ENCODE measurements at regions of chr11 and their contacts with region 1.

Region 1: DNA sequence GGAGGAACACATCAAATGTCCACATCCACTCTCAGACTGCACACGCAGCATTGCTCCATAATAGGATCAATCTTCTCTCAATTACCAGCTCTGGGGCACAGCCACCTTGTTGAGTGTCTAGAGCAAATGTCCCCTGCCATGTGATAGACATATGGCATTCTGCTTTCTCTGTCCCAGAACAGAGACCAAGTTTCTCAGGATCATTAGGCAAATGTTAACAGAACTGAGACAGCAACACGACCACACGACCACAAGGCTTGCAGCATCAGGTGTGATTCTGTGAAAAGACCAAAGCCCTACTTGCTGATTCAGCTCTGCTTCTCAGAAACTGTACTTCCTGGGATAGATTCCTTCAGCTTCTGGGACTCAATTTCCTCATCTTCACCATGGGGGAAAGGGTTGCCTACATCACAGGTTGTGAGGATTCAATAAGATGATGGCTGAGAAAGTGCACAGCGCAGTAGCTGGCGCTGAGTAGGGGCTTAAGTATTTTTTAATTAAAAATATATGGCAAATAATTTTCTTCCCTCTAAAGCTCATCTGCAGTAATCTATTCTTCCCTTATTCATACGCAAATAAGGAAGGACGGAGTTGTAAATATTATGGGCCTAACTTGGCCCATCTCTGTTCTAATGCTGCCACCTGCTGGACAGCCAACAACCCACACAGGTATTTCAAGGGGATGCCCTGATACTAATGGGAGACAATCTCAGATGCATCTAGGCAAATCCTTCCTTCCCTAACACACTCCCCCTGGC is 54.3 kb upstream of the USP47 start:
- DNase-seq: peak; percentile 43
- ATAC-seq: peak; percentile 95
- H3K4me3 ChIP-seq: no peak overlapping the region
- H3K27ac ChIP-seq: no peak overlapping the region
- H3K4me1 ChIP-seq: no peaks in the 10 kb centered on the region
- H3K27me3 ChIP-seq: peaks cover 0 to 2% of the 10 kb centered on the region in 2 experiments; a peak in 1 of 5 replicates
- CTCF ChIP-seq: peak; percentile 89
- EP300 ChIP-seq: no peak
- POLR2A ChIP-seq: no peak
- RAD21 ChIP-seq: peak; percentile 70

Region 2: GRCh38 chr11:10933455-10934292 is 853.8 kb before region 1 on chr11:
- CTCF ChIA-PET with region 1: interaction called, 4 read pairs
- POLR2A ChIA-PET with region 1: no interaction called
- in situ Hi-C with region 1: loop called (anchors 25 kb)
- intact Hi-C with region 1: loop called (anchors 5 kb)
- DNase-seq: peak; percentile 62
- ATAC-seq: peak; percentile 91
- H3K4me3 ChIP-seq: peak overlapping the region in 2 of 3 experiments; percentile 23 to 36; a peak in 2 of 6 replicates
- H3K27ac ChIP-seq: no peak overlapping the region
- H3K4me1 ChIP-seq: peaks cover 19% of the 10 kb centered on the region
- H3K27me3 ChIP-seq: peaks cover 2 to 55% of the 10 kb centered on the region in 2 experiments; a peak in 4 of 5 replicates
- CTCF ChIP-seq: peak; percentile 90
- EP300 ChIP-seq: no peak
- POLR2A ChIP-seq: no peak
- RAD21 ChIP-seq: peak; percentile 79

Region 3: DNA sequence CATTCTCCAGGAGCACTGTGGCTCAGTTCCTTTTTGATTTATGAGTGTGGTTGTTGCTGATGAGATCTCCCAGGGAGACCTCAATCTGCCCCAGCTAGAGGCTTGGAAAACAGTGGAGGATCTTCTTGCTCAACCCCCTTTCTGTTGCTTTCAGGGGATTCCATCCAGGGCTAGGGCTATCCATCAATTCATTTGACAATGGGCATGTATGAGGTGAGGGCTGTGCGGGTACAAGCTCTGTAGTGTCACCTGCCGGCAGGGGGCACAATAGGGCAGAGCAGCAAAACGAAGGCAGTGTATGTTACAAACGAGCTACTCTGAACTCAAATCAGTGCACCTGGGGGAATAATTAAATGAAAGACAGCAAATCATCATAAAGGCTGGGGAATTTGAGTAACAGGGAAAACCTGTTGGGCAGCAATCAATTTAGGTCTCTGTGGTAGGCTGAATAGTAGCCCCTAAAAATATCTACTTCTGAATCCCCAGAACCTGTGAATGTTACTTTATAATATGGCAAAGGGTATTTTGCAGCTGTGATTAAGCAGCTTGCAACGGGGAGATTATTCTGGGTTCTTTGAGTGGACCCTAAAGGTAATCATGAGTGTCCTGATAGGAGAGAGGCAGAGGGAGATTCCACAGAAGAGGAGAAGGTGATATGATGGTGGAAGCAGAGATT is 759.3 kb before region 1 on chr11:
- CTCF ChIA-PET with region 1: interaction called, 12 read pairs
- POLR2A ChIA-PET with region 1: no interaction called
- in situ Hi-C with region 1: loop called (anchors 5 kb)
- intact Hi-C with region 1: loop called (anchors 1 kb)
- DNase-seq: peak; percentile 34
- ATAC-seq: peak; percentile 94
- H3K4me3 ChIP-seq: no peak overlapping the region
- H3K27ac ChIP-seq: no peak overlapping the region
- H3K4me1 ChIP-seq: no peaks in the 10 kb centered on the region
- H3K27me3 ChIP-seq: 0 out of 5 replicates have a peak, but pooled peaks cover 0 to 3% of the 10 kb centered on the region in 2 experiments
- CTCF ChIP-seq: peak; percentile 79
- EP300 ChIP-seq: no peak
- POLR2A ChIP-seq: no peak
- RAD21 ChIP-seq: 0 out of 2 replicates have a peak, but pooled peaks have one; percentile 16

Region 4: DNA sequence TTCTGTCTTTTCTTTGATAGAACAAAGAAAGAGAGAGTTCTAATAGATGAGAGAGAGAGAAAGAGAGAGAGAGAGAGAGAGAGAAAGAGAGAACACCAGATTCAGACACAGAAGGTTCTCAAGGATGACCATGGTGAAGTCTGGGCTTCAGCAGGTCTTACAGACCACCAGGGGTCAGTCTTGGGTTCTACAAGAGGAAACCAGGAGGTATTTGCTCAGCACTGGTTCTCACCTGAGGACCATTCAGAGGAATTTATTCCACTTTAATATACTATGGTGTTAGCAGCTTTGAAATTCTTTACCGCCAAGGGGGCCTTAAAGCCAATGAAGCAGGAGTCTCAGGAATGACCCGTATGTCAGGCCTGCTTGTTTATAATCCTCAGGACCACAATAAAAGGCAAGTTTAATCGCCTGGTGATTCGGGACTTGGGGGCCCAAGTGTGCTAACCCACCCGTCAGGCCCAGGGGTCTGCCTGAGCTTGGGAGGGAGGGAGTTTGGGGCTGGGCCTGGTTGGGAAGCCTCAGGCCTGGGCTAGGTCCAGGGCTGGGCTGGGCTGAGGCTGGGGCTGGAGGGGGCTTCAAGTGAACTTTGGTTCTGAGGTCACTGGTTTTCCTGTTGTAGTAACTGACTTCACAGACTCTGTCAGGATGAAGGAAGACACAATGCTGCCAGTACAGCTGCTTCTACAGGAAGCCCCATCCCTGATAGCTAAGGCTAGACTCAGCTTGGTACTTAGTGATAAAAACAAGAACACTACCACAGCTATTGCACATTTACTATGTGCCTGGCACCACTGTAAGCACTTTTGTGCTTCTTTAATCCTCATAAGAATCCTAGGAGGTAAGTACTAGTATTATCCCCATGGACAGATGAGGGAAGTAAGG is 750.4 kb before region 1 on chr11:
- CTCF ChIA-PET with region 1: interaction called, 12 read pairs
- POLR2A ChIA-PET with region 1: no interaction called
- in situ Hi-C with region 1: no loop called
- intact Hi-C with region 1: no loop called
- DNase-seq: peak; percentile 64
- ATAC-seq: peak; percentile 89
- H3K4me3 ChIP-seq: no peak overlapping the region
- H3K27ac ChIP-seq: no peak overlapping the region
- H3K4me1 ChIP-seq: no peaks in the 10 kb centered on the region
- H3K27me3 ChIP-seq: peaks cover 2 to 3% of the 10 kb centered on the region in 2 experiments; a peak in 4 of 5 replicates
- CTCF ChIP-seq: peak; percentile 68
- EP300 ChIP-seq: no peak
- POLR2A ChIP-seq: no peak
- RAD21 ChIP-seq: 0 out of 2 replicates have a peak, but pooled peaks have one; percentile 29

Region 5: DNA sequence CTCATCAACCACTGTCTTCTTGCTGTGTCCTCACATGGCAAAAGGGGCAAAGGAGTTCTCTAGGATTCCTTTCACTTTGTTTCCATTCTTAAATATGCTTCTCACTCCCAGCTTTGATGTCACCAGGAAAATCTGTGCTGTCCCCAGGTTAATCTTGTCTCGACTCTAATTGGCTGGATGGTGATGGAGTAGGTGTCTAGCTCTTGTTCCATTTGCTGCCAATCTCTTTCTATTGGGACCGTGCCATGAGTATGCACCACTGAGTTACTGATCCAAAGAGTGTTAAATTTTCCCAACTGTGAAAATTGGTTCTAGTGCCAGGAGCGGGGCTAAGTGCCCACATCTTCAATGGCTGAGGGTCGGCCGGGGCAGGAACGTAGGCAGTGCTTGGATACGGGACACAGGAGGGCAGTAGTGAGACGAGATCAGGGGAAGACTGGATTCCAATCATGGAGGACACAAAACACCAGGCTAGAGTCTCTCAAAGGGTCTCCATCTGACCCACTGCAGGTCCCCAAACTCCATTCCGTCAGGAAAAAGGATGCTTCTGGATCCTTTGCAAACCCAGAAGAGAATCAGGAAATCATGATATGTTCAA is 386.8 kb before region 1 on chr11:
- CTCF ChIA-PET with region 1: interaction called, 18 read pairs
- POLR2A ChIA-PET with region 1: no interaction called
- in situ Hi-C with region 1: loop called (anchors 5 kb)
- intact Hi-C with region 1: loop called (anchors 1 kb)
- DNase-seq: peak; percentile 12
- ATAC-seq: peak; percentile 70
- H3K4me3 ChIP-seq: no peak overlapping the region
- H3K27ac ChIP-seq: no peak overlapping the region
- H3K4me1 ChIP-seq: no peaks in the 10 kb centered on the region
- H3K27me3 ChIP-seq: peaks cover 1 to 17% of the 10 kb centered on the region in 2 experiments; a peak in 3 of 5 replicates
- CTCF ChIP-seq: peak; percentile 40; the same call in 1 of the 2 replicates
- EP300 ChIP-seq: no peak
- POLR2A ChIP-seq: no peak
- RAD21 ChIP-seq: no peak

Region 6: DNA sequence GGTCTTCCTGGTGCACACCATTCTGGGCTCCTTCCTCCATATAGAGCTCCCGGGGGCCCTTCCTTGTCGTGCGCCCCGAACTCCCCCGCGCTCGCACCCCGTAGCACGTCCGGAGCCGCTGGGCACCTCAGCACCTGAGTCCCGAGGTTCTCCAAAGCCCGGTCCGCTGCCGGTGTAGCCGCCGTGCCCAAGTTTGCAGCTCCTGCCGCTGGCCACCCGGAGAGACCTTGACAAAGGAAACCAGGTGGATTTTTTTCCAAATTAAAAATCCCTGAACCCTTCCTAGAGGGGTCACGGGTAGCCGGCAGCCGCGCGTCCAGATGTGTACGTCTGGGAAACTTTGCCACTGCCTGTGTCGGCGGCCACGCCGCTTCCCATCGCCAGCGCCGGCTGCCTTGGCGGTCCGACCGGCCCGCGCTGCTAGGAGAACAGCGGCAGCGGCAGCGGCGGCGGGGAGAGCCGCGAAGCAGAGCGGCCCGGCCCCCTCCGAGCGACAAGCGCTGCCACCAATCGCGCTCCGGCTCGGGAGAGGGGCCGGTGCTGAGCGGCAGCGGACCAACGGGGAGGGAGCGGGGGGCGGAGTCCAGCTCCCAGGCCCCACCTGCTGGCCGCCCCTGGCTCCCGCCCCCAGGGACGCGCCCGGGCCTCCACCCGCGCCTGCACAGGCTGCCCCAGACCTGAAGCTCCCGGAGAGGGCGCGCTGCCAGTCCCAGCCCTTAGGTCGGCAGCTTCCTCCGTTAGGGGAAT is 165.7 kb before region 1 on chr11 and contains the start of gene GALNT18:
- CTCF ChIA-PET with region 1: no interaction called
- POLR2A ChIA-PET with region 1: no interaction called
- in situ Hi-C with region 1: no loop called
- intact Hi-C with region 1: loop called (anchors 5 kb)
- DNase-seq: peak; percentile 67
- ATAC-seq: peak; percentile 99
- H3K4me3 ChIP-seq: peak within 1 kb of the TSS; percentile 39 to 64 (median 47); a peak in 5 of 6 replicates
- H3K27ac ChIP-seq: no peak within 1 kb of the TSS
- H3K4me1 ChIP-seq: peaks cover 12% of the 10 kb centered on the region; the same call in 1 of the 2 replicates
- H3K27me3 ChIP-seq: peaks cover 5 to 56% of the 10 kb centered on the region in 2 experiments; a peak in 4 of 5 replicates
- CTCF ChIP-seq: peak; percentile 57
- EP300 ChIP-seq: no peak
- POLR2A ChIP-seq: no peak
- RAD21 ChIP-seq: 0 out of 2 replicates have a peak, but pooled peaks have one; percentile 20
- total RNA-seq, gene GALNT18: 0.10 TPM in 1 of 2 replicates, not detected in the other

Region 7: DNA sequence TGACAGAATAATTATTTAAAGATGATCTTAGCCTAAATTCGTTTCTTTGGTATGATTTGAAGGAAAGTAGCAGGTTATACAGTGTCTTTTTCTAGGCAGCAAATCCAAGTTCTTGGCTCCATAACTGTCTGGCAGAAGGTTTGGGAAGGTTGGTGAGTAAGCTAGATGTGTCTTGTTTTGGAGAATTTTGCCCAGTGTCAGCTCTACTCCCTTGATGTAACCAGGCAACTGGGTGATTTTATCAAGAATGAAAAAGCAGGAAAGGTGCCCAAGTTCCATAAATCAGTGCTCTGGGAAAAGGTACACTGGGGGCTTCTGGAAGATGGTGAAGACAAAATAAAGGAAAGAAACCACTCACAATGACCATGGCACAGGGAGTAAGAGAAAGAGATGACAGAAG is 17.2 kb before region 1 on chr11:
- CTCF ChIA-PET with region 1: no interaction called
- POLR2A ChIA-PET with region 1: no interaction called
- in situ Hi-C with region 1: no loop called
- intact Hi-C with region 1: no loop called
- DNase-seq: no peak
- ATAC-seq: no peak
- H3K4me3 ChIP-seq: no peak overlapping the region
- H3K27ac ChIP-seq: no peak overlapping the region
- H3K4me1 ChIP-seq: no peaks in the 10 kb centered on the region
- H3K27me3 ChIP-seq: peaks cover 2 to 5% of the 10 kb centered on the region in 2 experiments; a peak in 2 of 5 replicates
- CTCF ChIP-seq: no peak
- EP300 ChIP-seq: no peak
- POLR2A ChIP-seq: no peak
- RAD21 ChIP-seq: no peak

Region 8: GRCh38 chr11:12043959-12044819 is 256.7 kb after region 1 on chr11:
- CTCF ChIA-PET with region 1: no interaction called
- POLR2A ChIA-PET with region 1: no interaction called
- in situ Hi-C with region 1: loop called (anchors 10 kb)
- intact Hi-C with region 1: loop called (anchors 2 kb)
- DNase-seq: peak; percentile 87
- ATAC-seq: peak; percentile 89
- H3K4me3 ChIP-seq: peak overlapping the region in 1 of 3 experiments; percentile 50; a peak in 2 of 6 replicates
- H3K27ac ChIP-seq: no peak overlapping the region
- H3K4me1 ChIP-seq: peaks cover 26% of the 10 kb centered on the region
- H3K27me3 ChIP-seq: no peaks in the 10 kb centered on the region; a peak in 1 of 5 replicates
- CTCF ChIP-seq: peak; percentile 94
- EP300 ChIP-seq: peak in 1 of 2 experiments; percentile 32; a peak in 1 of 4 replicates
- POLR2A ChIP-seq: no peak
- RAD21 ChIP-seq: peak; percentile 82